Aorta (tissue), 5 donors: ENCODE measurements at regions of chr4 and their contacts with region 1.

Region 1: DNA sequence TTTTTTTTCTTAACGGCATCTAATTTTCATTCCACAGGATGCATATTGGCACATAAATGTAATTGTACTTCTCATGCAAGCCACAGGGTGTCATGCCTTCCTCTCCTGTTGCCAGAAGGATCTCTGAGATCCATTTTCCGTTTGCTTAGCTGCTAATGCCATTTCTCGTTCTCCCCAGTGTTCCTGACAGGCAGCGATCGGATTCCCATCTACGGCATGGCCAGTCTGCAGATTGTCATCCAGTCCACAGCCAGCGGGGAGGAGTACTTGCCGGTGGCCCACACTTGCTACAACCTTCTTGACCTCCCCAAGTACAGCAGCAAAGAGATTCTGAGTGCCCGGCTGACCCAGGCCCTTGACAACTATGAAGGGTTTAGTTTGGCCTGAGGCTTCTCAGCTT is 8.9 kb upstream of the NAP1L5 start:
- DNase-seq: peak in 1 of 2 donors; percentile 55
- ATAC-seq: peak; percentile 91
- H3K4me3 ChIP-seq: no peak overlapping the region
- H3K27ac ChIP-seq: peak overlapping the region; percentile 0 to 84
- H3K4me1 ChIP-seq: peaks cover 0 to 3% of the 10 kb centered on the region in 2 donors
- H3K27me3 ChIP-seq: no peaks in the 10 kb centered on the region

Region 2: GRCh38 chr4:88567591-88567990 is 139.0 kb before region 1 on chr4:
- intact Hi-C with region 1: no loop called
- DNase-seq: no peak
- ATAC-seq: no peak
- H3K4me3 ChIP-seq: no peak overlapping the region
- H3K27ac ChIP-seq: no peak overlapping the region
- H3K4me1 ChIP-seq: no peaks in the 10 kb centered on the region
- H3K27me3 ChIP-seq: no peaks in the 10 kb centered on the region

Region 3: DNA sequence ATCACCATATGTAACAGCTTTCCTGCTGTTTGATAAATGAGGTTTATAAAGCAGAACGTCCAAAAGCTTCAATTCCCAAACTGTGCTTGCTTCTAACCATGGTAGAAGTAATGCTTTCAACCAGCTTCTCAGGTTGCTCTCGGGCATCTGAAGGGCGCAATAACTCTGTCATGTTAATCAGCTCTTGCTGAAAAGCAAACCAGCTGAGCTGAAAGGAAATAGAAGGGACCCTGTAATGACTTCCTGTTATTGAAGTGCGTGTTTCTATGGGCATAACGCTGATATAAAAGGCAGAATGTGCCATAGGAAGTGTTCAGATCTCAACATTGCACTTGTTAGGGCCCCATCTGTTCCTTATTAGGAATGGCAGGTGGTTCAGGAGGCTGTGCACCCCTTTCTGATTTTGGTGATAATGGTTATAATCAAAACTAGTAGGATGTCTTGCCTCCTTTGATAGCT is 93.1 kb before region 1 on chr4:
- intact Hi-C with region 1: no loop called
- DNase-seq: no peak
- ATAC-seq: no peak
- H3K4me3 ChIP-seq: no peak overlapping the region
- H3K27ac ChIP-seq: peak overlapping the region; percentile 67 to 80
- H3K4me1 ChIP-seq: peaks cover 9 to 13% of the 10 kb centered on the region in 2 donors
- H3K27me3 ChIP-seq: no peaks in the 10 kb centered on the region

Region 4: GRCh38 chr4:88792268-88792781 is 85.8 kb after region 1 on chr4:
- intact Hi-C with region 1: loop called in 1 of 2 experiments (anchors 5 kb)
- DNase-seq: no peak
- ATAC-seq: no peak
- H3K4me3 ChIP-seq: no peak overlapping the region
- H3K27ac ChIP-seq: peak overlapping the region in 1 of 2 donors; percentile 28
- H3K4me1 ChIP-seq: peaks cover 2 to 3% of the 10 kb centered on the region in 2 donors
- H3K27me3 ChIP-seq: no peaks in the 10 kb centered on the region

Region 5: GRCh38 chr4:88823058-88823919 is 116.7 kb after region 1 on chr4:
- intact Hi-C with region 1: loop called in 1 of 2 experiments (anchors 5 kb)
- DNase-seq: peak; percentile 88 to 94
- ATAC-seq: peak; percentile 96
- H3K4me3 ChIP-seq: peak overlapping the region; percentile 29 to 67
- H3K27ac ChIP-seq: peak overlapping the region; percentile 76 to 92
- H3K4me1 ChIP-seq: peaks cover 2 to 5% of the 10 kb centered on the region in 2 donors
- H3K27me3 ChIP-seq: no peaks in the 10 kb centered on the region